Activated CD8-positive, alpha-beta T cell treated with anti-CD3 and anti-CD28 coated beads for 36 hours (primary cell): ENCODE measurements at regions of chr16 and their contacts with region 1.

Region 1: DNA sequence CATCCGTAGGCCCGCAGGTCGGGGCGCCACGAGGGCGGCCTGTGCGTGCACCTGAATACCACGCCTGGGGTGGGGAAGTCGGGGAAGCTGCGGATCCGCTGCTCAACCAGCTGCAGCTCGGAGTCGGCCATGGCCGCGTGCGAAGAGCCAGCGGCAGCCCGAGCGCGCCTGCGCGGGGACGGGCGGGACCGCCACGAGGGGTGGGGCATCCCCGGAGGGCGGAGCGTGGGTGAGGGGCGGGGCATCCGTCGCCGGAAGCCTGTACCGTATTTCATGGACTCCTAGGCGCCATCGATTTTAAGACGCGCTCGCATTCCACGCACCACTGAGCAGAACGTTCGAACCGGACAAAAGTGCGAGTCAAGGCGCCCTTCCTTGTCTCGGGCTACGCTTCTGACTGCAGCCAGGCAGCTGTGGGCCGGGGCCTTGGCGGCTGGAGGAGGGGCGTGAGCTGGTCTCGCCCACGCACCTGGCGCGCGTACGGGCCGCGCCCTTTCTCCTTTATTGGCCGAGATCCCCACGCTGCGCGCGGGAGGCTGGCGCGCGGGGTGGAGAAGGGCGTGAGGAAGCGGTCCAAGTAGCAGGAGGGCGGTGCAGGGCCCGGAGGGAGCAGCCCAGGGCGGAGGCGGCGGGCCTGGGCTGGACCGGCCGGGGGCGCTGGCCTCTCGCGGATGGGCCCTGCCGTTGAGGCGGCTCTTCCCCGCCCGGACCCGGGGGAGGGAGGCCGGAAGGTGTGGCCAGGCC is at the start of gene APRT:
- DNase-seq: peak; percentile 95
- ATAC-seq: peak; percentile 86
- H3K4me3 Mint-ChIP-seq: peak within 1 kb of the TSS; percentile 91
- H3K27ac Mint-ChIP-seq: peak within 1 kb of the TSS; percentile 98
- H3K4me1 Mint-ChIP-seq: peaks cover 14% of the 10 kb centered on the region
- H3K27me3 Mint-ChIP-seq: no peaks in the 10 kb centered on the region
- CTCF ChIP-seq: no peak
- total RNA-seq, gene APRT: 236 to 240 TPM

Region 2: GRCh38 chr16:88706288-88706964 is 105.5 kb before region 1 on chr16 and contains the starts of genes CTU2 and RNF166:
- CTCF ChIA-PET with region 1: no interaction called
- POLR2A ChIA-PET with region 1: interaction called, 23 read pairs
- intact Hi-C with region 1: no loop called
- DNase-seq: peak; percentile 93
- ATAC-seq: peak; percentile 62
- H3K4me3 Mint-ChIP-seq: peak within 1 kb of the TSS; percentile 94
- H3K27ac Mint-ChIP-seq: peak within 1 kb of the TSS; percentile 92
- H3K4me1 Mint-ChIP-seq: peaks cover 34% of the 10 kb centered on the region
- H3K27me3 Mint-ChIP-seq: no peaks in the 10 kb centered on the region
- CTCF ChIP-seq: no peak
- total RNA-seq, gene CTU2: 37.1 to 37.8 TPM
- total RNA-seq, gene RNF166: 80.7 to 82.4 TPM

Region 3: GRCh38 chr16:88737298-88738150 is 74.4 kb before region 1 on chr16:
- CTCF ChIA-PET with region 1: interaction called, 13 read pairs
- POLR2A ChIA-PET with region 1: interaction called, 7 read pairs
- intact Hi-C with region 1: no loop called
- DNase-seq: peak; percentile 65
- ATAC-seq: peak; percentile 93
- H3K4me3 Mint-ChIP-seq: no peak overlapping the region
- H3K27ac Mint-ChIP-seq: no peak overlapping the region
- H3K4me1 Mint-ChIP-seq: no peaks in the 10 kb centered on the region
- H3K27me3 Mint-ChIP-seq: no peaks in the 10 kb centered on the region
- CTCF ChIP-seq: peak; percentile 99

Region 4: GRCh38 chr16:88856828-88857733 is 45.1 kb after region 1 on chr16 and contains the starts of genes GALNS and TRAPPC2L:
- CTCF ChIA-PET with region 1: interaction called, 66 read pairs
- POLR2A ChIA-PET with region 1: interaction called, 10 read pairs
- intact Hi-C with region 1: no loop called
- DNase-seq: peak; percentile 100
- ATAC-seq: peak; percentile 92
- H3K4me3 Mint-ChIP-seq: peak within 1 kb of the TSS; percentile 92
- H3K27ac Mint-ChIP-seq: peak within 1 kb of the TSS; percentile 87
- H3K4me1 Mint-ChIP-seq: peaks cover 31% of the 10 kb centered on the region
- H3K27me3 Mint-ChIP-seq: no peaks in the 10 kb centered on the region
- CTCF ChIP-seq: no peak
- total RNA-seq, gene GALNS: 24.5 to 25.4 TPM
- total RNA-seq, gene TRAPPC2L: 56.4 to 61.9 TPM